Activated CD8-positive, alpha-beta T cell treated with anti-CD3 and anti-CD28 coated beads, Interleukin-2, amount 10 ng/mL, durations not matched to agents 7 days and 5 days (primary cell): ENCODE measurements at regions of chr1 and their contacts with region 1.

Region 1: DNA sequence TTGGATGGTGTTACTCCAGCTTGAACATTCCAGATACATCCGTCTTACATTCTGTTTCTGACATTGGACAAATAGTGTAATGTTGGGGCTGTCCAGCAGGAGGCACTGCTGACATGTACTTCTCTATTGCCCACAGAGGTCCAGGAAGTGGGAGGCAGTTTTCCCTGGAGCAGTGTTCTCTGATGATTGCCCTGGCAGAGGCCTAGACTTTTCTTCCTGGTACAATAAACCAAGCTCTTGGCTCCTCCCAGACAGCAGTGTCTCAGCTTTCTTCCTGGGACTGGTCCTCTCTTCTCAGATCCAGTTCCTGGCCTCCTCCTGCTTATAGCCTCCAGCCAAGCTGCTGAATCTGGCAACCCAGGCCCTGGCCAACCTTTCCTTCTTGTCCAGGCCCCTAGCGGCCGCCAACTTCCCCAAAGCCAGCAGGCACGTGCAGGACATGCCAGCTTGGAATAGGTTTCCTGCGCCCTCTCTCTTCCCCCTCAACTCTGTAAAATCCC is 14.9 kb upstream of the IFNLR1 start:
- DNase-seq: peak; percentile 72
- ATAC-seq: peak; percentile 24
- H3K4me3 Mint-ChIP-seq: no peak overlapping the region
- H3K27ac Mint-ChIP-seq: no peak overlapping the region
- H3K4me1 Mint-ChIP-seq: peaks cover 9% of the 10 kb centered on the region
- H3K27me3 Mint-ChIP-seq: peaks cover 10% of the 10 kb centered on the region

Region 2: DNA sequence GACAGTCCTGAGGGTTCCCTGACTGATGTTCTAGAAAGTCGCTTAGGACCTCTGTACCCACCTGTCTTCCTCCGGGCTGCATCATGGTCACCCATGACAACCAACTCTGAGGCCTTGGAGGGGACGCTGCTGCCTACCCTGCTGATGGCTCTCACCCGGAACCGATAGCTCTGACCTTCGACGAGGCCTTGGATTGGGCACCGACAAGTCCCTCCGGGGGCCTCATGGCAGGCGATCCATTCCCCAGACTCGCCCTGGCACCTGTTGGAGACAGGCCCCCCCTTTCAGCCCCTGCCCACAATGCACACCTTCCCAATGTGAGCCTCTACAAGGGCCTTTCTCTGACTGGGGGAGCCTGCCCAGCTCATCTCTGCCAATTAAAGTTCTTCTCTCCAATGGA is 111.3 kb before region 1 on chr1:
- CTCF ChIA-PET with region 1: no interaction called
- POLR2A ChIA-PET with region 1: no interaction called
- DNase-seq: no peak
- ATAC-seq: no peak
- H3K4me3 Mint-ChIP-seq: no peak overlapping the region
- H3K27ac Mint-ChIP-seq: no peak overlapping the region
- H3K4me1 Mint-ChIP-seq: no peaks in the 10 kb centered on the region
- H3K27me3 Mint-ChIP-seq: no peaks in the 10 kb centered on the region

Region 3: GRCh38 chr1:24186993-24187805 is 14.8 kb before region 1 on chr1 and contains the start of gene IFNLR1:
- CTCF ChIA-PET with region 1: interaction called, 124 read pairs
- POLR2A ChIA-PET with region 1: no interaction called
- DNase-seq: peak; percentile 75
- ATAC-seq: peak; percentile 89
- H3K4me3 Mint-ChIP-seq: peak within 1 kb of the TSS; percentile 76
- H3K27ac Mint-ChIP-seq: peak within 1 kb of the TSS; percentile 61
- H3K4me1 Mint-ChIP-seq: peaks cover 50% of the 10 kb centered on the region
- H3K27me3 Mint-ChIP-seq: no peaks in the 10 kb centered on the region
- total RNA-seq, gene IFNLR1: 2.6 to 4.0 TPM

Region 4: DNA sequence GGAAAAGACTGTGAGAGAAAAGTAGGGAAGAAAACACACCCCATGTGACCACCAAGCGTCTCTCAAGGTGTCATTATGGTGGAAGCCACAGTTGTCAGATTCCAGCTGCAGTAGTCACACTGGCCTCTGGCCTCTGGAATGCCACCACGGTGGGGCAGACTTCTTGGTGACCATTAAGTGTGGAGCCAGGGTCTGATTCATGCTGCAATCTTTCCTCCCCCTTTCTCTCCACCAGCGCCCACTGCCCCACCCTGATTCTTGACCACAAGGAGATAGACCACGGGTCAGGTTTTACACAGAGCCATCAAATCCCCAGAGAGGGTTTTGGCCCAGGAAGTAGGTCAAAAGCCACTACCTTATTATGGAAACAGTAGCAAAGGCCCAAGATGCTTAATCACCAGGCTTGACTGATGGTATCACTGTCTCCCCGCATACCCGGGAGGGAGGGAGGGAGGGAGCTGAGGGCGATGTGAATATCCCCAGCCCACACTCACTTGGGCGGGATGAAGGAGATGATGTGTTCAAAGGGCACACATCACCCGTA is 64.5 kb after region 1 on chr1:
- CTCF ChIA-PET with region 1: no interaction called
- POLR2A ChIA-PET with region 1: no interaction called
- DNase-seq: no peak
- ATAC-seq: no peak
- H3K4me3 Mint-ChIP-seq: no peak overlapping the region
- H3K27ac Mint-ChIP-seq: no peak overlapping the region
- H3K4me1 Mint-ChIP-seq: peaks cover 15% of the 10 kb centered on the region
- H3K27me3 Mint-ChIP-seq: peaks cover 31% of the 10 kb centered on the region

Region 5: DNA sequence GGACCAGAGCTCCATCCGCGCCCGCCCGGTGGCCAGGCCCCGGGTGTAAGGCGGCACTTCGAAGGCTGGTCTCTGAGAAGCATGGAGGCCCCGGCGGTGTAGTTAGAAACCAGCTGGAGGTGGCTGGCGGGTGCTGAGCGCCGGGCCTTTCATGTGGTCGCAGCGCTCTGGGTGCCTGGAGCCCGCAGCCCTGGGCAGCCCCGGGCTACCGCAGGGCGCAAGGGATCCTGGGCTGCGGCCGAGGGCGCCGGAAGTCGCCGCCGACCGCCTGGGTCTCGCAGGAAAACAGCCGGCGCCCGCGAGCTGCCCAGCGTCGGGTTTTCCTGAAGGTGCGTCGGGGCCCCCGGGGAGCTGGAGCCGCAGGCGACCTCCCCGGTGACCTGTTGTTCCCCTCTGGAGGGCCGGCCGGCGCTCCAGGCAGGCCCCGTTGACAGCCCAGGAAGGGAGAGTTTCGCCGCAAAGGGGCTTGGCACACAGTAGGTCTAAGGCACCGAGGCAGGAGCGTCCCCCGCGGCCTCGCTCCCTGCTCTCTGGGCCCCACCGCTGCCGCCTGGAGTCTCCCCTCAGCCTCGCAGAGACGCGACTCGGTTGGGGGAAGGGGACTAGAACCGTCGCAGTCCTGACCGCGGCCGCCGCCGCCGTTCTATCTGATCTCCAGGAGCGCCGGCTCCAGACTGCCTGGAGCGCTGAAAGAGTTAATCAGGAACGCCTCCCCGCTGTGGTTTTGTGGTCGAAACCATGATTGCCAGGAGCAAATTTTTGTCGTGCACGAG is 119.9 kb after region 1 on chr1:
- CTCF ChIA-PET with region 1: interaction called, 15 read pairs
- POLR2A ChIA-PET with region 1: no interaction called
- DNase-seq: peak; percentile 79
- ATAC-seq: peak; percentile 81
- H3K4me3 Mint-ChIP-seq: peak overlapping the region; percentile 62
- H3K27ac Mint-ChIP-seq: peak overlapping the region; percentile 68
- H3K4me1 Mint-ChIP-seq: peaks cover 42% of the 10 kb centered on the region
- H3K27me3 Mint-ChIP-seq: peaks cover 88% of the 10 kb centered on the region

Region 6: GRCh38 chr1:24385160-24385940 is 183.4 kb after region 1 on chr1:
- CTCF ChIA-PET with region 1: interaction called, 375 read pairs
- POLR2A ChIA-PET with region 1: interaction called, 3 read pairs
- DNase-seq: peak; percentile 46
- ATAC-seq: peak; percentile 59
- H3K4me3 Mint-ChIP-seq: no peak overlapping the region
- H3K27ac Mint-ChIP-seq: peak overlapping the region; percentile 26
- H3K4me1 Mint-ChIP-seq: peaks cover 27% of the 10 kb centered on the region
- H3K27me3 Mint-ChIP-seq: no peaks in the 10 kb centered on the region

Region 7: DNA sequence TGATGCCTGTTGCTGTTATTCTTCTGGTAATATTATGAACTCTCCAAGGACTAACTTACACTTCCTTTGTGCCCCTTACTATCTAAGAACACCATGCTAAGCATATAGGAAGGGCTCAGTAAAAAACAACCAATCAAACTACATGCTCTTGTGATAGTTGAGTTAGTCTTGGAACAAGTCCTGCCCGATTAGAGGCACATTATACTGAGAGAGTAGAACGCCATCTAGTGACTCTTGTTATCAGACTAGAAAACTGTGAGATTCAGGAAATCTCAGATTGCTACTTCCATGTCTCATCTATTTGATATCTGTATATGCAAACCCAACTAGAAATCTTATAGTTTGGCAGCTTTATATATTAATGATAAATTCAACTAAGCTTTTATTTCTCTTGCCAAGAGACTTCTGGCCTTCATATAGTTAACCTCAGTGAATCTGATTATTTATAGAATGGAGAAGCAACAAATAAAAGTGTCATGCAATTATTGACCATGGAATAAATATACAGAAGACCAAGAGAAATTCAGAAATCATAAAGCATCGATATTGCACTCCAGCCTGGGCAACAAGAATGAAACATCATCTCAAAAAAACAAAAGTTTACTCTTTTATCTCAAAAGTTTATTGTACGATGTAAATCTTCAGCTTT is 433.3 kb after region 1 on chr1:
- CTCF ChIA-PET with region 1: interaction called, 16 read pairs
- POLR2A ChIA-PET with region 1: no interaction called
- DNase-seq: no peak
- ATAC-seq: peak; percentile 84
- H3K4me3 Mint-ChIP-seq: no peak overlapping the region
- H3K27ac Mint-ChIP-seq: no peak overlapping the region
- H3K4me1 Mint-ChIP-seq: peaks cover 5% of the 10 kb centered on the region
- H3K27me3 Mint-ChIP-seq: peaks cover 14% of the 10 kb centered on the region